ENCODE measurements at regions of chr11 and their contacts with region 1.

Region 1: DNA sequence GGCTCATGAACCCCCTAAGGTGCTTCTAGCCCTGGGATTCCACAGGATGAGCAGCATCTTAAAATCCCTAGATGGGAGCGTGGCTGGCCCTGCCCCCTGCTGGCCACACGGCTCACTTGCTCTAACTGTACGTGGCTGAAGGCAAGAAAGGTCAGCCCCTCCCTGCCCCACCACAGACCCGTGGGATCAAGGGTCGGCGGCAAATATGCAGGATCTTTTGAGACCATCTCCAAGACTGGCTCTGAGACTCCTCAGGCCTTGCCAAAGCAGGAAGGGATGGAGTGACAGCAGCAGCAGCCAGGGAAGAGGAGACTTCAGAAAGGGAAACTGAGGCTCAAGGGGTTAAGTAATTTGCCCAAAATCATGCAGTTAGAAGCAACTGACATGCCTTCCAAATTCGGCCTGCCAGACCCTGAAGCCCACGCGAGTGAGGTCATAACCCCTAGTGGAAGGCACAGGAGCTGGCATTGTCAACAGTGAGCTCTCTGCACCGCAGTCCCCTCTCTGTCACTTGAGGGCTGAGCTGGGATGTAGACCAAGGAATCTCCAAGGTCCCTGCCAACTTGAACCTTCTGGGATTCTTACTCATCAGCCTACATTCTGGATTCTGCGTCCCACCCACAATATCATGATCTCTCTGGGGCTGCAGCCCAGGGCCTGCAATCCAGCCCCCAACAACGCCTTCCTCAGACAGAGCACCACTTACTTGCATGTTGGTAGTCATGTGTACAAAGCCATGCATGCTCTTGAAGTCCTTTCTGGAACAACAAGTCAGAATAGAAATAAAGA is 31.4 kb downstream of the CREB3L1 start:
- DNase-seq: peak; percentile 86
- H3K4me3 ChIP-seq: no peak overlapping the region
- H3K4me3 Mint-ChIP-seq: no peak overlapping the region
- H3K27ac Mint-ChIP-seq: peak overlapping the region; percentile 17
- H3K4me1 ChIP-seq: peaks cover 16% of the 10 kb centered on the region
- H3K4me1 Mint-ChIP-seq: peaks cover 27% of the 10 kb centered on the region
- H3K27me3 ChIP-seq: no peaks in the 10 kb centered on the region
- H3K27me3 Mint-ChIP-seq: no peaks in the 10 kb centered on the region
- CTCF ChIP-seq: peak; percentile 96 to 97

Region 2: GRCh38 chr11:46295312-46296058 is 13.3 kb before region 1 on chr11:
- CTCF ChIA-PET with region 1: interaction called, 11 read pairs
- POLR2A ChIA-PET with region 1: no interaction called
- intact Hi-C with region 1: no loop called
- DNase-seq: no peak
- H3K4me3 ChIP-seq: no peak overlapping the region
- H3K4me3 Mint-ChIP-seq: peak overlapping the region; percentile 44
- H3K27ac Mint-ChIP-seq: peak overlapping the region; percentile 81
- H3K4me1 ChIP-seq: peaks cover 46% of the 10 kb centered on the region
- H3K4me1 Mint-ChIP-seq: peaks cover 19% of the 10 kb centered on the region
- H3K27me3 ChIP-seq: no peaks in the 10 kb centered on the region
- H3K27me3 Mint-ChIP-seq: no peaks in the 10 kb centered on the region
- CTCF ChIP-seq: no peak

Measured in Caco-2 (cell line).